ENCODE measurements at regions of chr12 and their contacts with region 1.

Region 1: GRCh38 chr12:13289653-13290289 is 93.2 kb downstream of the EMP1 start:
- DNase-seq: no peak
- H3K4me3 ChIP-seq: no peak overlapping the region
- H3K27ac ChIP-seq: no peak overlapping the region
- H3K4me1 ChIP-seq: no peaks in the 10 kb centered on the region
- H3K27me3 ChIP-seq: no peaks in the 10 kb centered on the region
- CTCF ChIP-seq: no peak

Region 2: DNA sequence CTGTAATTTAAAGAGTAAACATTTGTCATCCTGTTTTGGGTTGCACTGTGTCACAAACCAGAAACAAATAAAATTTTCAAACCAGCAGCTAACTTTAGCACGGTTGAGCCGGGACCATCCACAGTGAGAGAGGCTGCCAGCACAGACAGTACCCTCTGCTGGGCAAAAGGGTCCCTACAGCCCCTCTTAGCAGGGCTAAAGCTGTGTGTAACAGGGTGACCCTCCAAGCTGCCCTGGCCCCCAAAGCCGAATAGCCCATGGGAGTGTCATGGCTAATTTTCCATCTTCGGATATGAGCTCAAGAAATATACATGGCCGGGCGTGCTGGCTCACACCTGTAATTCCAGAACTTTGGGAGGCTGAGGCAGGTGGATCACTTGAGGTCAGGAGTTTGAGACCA is 848.7 kb after region 1 on chr12:
- CTCF ChIA-PET with region 1: interaction called, 10 read pairs
- POLR2A ChIA-PET with region 1: no interaction called
- intact Hi-C with region 1: no loop called
- DNase-seq: no peak
- H3K4me3 ChIP-seq: no peak overlapping the region
- H3K27ac ChIP-seq: no peak overlapping the region
- H3K4me1 ChIP-seq: no peaks in the 10 kb centered on the region
- H3K27me3 ChIP-seq: no peaks in the 10 kb centered on the region; the same call in 1 of the 2 replicates
- CTCF ChIP-seq: peak; percentile 33; the same call in 1 of the 2 replicates